ENCODE measurements at regions of chr17 and their contacts with region 1.

Region 1: GRCh38 chr17:50094753-50095619 is at the start of gene PDK2:
- DNase-seq: peak; percentile 78
- ATAC-seq: peak; percentile 98
- H3K4me3 ChIP-seq: peak within 1 kb of the TSS; percentile 85
- H3K27ac ChIP-seq: peak within 1 kb of the TSS; percentile 44
- H3K4me1 ChIP-seq: peaks cover 17% of the 10 kb centered on the region
- H3K27me3 ChIP-seq: no peaks in the 10 kb centered on the region
- CTCF ChIP-seq: no peak
- EP300 ChIP-seq: peak in 1 of 2 experiments; percentile 38; a peak in 1 of 4 replicates
- POLR2A ChIP-seq: peak; percentile 71
- RAD21 ChIP-seq: no peak
- polyA plus RNA-seq, gene PDK2: 0.98 to 1.2 TPM

Region 2: DNA sequence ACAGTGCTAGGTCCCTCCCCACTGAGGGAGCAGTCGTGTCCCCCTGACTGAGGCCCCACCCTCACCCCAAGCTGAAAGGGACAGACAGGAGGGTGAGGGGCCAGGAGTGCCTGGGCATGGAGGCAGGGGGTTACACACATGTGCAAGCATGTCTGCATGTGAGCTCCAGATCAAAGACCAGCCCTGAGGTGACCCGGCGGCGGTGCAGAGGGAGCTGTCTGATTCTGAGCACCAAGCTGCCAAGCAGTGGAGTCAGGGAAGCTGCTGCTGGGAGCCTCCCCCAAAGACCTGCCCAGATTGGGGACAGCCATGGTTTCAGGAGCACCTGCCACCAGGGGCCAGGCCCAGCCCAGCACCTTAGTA is 105.5 kb before region 1 on chr17:
- CTCF ChIA-PET with region 1: no interaction called
- POLR2A ChIA-PET with region 1: no interaction called
- RAD21 ChIA-PET with region 1: no interaction called
- SMC1A ChIA-PET with region 1: no interaction called
- in situ Hi-C with region 1: no loop called
- intact Hi-C with region 1: no loop called
- DNase-seq: no peak
- ATAC-seq: no peak
- H3K4me3 ChIP-seq: no peak overlapping the region
- H3K27ac ChIP-seq: no peak overlapping the region
- H3K4me1 ChIP-seq: no peaks in the 10 kb centered on the region
- H3K27me3 ChIP-seq: peaks cover 11 to 15% of the 10 kb centered on the region in 2 experiments
- CTCF ChIP-seq: no peak
- EP300 ChIP-seq: no peak
- POLR2A ChIP-seq: no peak
- RAD21 ChIP-seq: no peak

Region 3: GRCh38 chr17:50026901-50027630 is 67.9 kb before region 1 on chr17:
- CTCF ChIA-PET with region 1: interaction called, 64 read pairs
- POLR2A ChIA-PET with region 1: no interaction called
- RAD21 ChIA-PET with region 1: interaction called, 3 read pairs
- SMC1A ChIA-PET with region 1: interaction called, 18 read pairs
- in situ Hi-C with region 1: loop called (anchors 5 kb)
- intact Hi-C with region 1: no loop called
- DNase-seq: no peak
- ATAC-seq: peak; percentile 95
- H3K4me3 ChIP-seq: no peak overlapping the region
- H3K27ac ChIP-seq: no peak overlapping the region
- H3K4me1 ChIP-seq: no peaks in the 10 kb centered on the region
- H3K27me3 ChIP-seq: peaks cover 0 to 2% of the 10 kb centered on the region in 2 experiments; a peak in 3 of 4 replicates
- CTCF ChIP-seq: peak; percentile 93 to 95 (median 95)
- EP300 ChIP-seq: no peak
- POLR2A ChIP-seq: no peak
- RAD21 ChIP-seq: peak; percentile 77

Region 4: GRCh38 chr17:50079334-50080095 is 15.5 kb before region 1 on chr17:
- CTCF ChIA-PET with region 1: interaction called, 13 read pairs
- POLR2A ChIA-PET with region 1: interaction called, 3 read pairs
- RAD21 ChIA-PET with region 1: interaction called, 5 read pairs
- SMC1A ChIA-PET with region 1: interaction called, 4 read pairs
- in situ Hi-C with region 1: no loop called
- intact Hi-C with region 1: no loop called
- DNase-seq: no peak
- ATAC-seq: peak; percentile 77
- H3K4me3 ChIP-seq: no peak overlapping the region
- H3K27ac ChIP-seq: no peak overlapping the region
- H3K4me1 ChIP-seq: peaks cover 5% of the 10 kb centered on the region; the same call in 1 of the 2 replicates
- H3K27me3 ChIP-seq: no peaks in the 10 kb centered on the region
- CTCF ChIP-seq: peak; percentile 42 to 72 (median 55)
- EP300 ChIP-seq: no peak
- POLR2A ChIP-seq: no peak
- RAD21 ChIP-seq: peak; percentile 37; the same call in 1 of the 2 replicates

Region 5: DNA sequence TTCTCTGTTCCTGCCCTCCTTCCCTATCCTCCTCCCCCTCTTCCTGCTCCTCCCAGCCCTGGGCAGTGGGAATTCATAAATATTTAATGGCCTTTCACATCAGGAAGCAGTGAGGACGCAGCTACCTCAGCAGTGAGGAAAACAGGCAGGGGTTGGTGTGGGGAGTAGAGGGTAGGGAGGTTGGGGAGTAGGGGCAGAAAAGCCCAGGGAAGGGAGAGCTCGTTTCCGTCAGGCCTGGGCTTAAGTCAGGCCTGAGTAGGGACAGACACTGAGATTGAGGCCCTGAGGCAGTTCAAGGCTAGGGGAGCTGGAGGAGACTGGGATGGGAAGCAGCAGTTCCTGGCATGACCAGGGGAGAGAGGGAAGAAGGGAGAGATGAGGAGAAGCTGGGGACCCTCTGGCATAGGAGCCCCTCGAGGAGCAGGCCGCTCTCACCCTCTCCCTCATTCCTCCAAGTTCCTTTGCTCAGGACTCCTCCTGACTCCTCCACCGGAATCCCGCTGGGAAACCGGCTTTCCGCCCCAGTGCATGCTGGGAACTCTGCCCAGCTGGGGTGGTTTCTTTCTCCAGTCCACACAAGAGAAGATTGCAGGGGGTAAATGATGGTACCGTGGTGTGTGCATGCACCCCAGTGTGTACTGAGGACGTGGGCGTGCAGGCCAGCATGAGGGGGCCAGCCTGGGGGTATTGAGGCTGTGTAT is 28.8 kb after region 1 on chr17:
- CTCF ChIA-PET with region 1: interaction called, 21 read pairs
- POLR2A ChIA-PET with region 1: no interaction called
- RAD21 ChIA-PET with region 1: no interaction called
- SMC1A ChIA-PET with region 1: interaction called, 3 read pairs
- in situ Hi-C with region 1: no loop called
- intact Hi-C with region 1: no loop called
- DNase-seq: no peak
- ATAC-seq: no peak
- H3K4me3 ChIP-seq: no peak overlapping the region
- H3K27ac ChIP-seq: no peak overlapping the region
- H3K4me1 ChIP-seq: peaks cover 4% of the 10 kb centered on the region; the same call in 1 of the 2 replicates
- H3K27me3 ChIP-seq: peaks cover 6 to 9% of the 10 kb centered on the region in 2 experiments
- CTCF ChIP-seq: no peak
- EP300 ChIP-seq: no peak
- POLR2A ChIP-seq: no peak
- RAD21 ChIP-seq: no peak

Region 6: GRCh38 chr17:50151041-50151936 is 56.3 kb after region 1 on chr17:
- CTCF ChIA-PET with region 1: interaction called, 20 read pairs
- POLR2A ChIA-PET with region 1: interaction called, 3 read pairs
- RAD21 ChIA-PET with region 1: interaction called, 17 read pairs
- SMC1A ChIA-PET with region 1: interaction called, 14 read pairs
- in situ Hi-C with region 1: no loop called
- intact Hi-C with region 1: loop called (anchors 5 kb)
- DNase-seq: peak; percentile 63
- ATAC-seq: peak; percentile 67
- H3K4me3 ChIP-seq: peak overlapping the region; percentile 95
- H3K27ac ChIP-seq: peak overlapping the region; percentile 89
- H3K4me1 ChIP-seq: peaks cover 46% of the 10 kb centered on the region
- H3K27me3 ChIP-seq: no peaks in the 10 kb centered on the region
- CTCF ChIP-seq: peak; percentile 49 to 84 (median 66)
- EP300 ChIP-seq: no peak; a peak in 1 of 4 replicates
- POLR2A ChIP-seq: peak; percentile 70
- RAD21 ChIP-seq: no peak

Region 7: GRCh38 chr17:50177983-50178834 is 83.2 kb after region 1 on chr17:
- CTCF ChIA-PET with region 1: interaction called, 20 read pairs
- POLR2A ChIA-PET with region 1: no interaction called
- RAD21 ChIA-PET with region 1: no interaction called
- SMC1A ChIA-PET with region 1: no interaction called
- in situ Hi-C with region 1: no loop called
- intact Hi-C with region 1: no loop called
- DNase-seq: no peak
- ATAC-seq: peak; percentile 96
- H3K4me3 ChIP-seq: no peak overlapping the region
- H3K27ac ChIP-seq: no peak overlapping the region
- H3K4me1 ChIP-seq: peaks cover 4% of the 10 kb centered on the region
- H3K27me3 ChIP-seq: no peaks in the 10 kb centered on the region
- CTCF ChIP-seq: peak; percentile 61 to 69 (median 65)
- EP300 ChIP-seq: no peak
- POLR2A ChIP-seq: no peak
- RAD21 ChIP-seq: 0 out of 2 replicates have a peak, but pooled peaks have one; percentile 38

Measured in GM12878 (cell line).